K562 (cell line): ENCODE measurements at regions of chr1 and their contacts with region 1.

Region 1: GRCh38 chr1:47333922-47334764 is 553 bp downstream of the CMPK1 start:
- DNase-seq: peak; percentile 85 to 93 (median 90)
- ATAC-seq: peak; percentile 88
- H3K4me3 ChIP-seq: peak overlapping the region; percentile 93
- H3K27ac ChIP-seq: peak overlapping the region; percentile 85
- H3K4me1 ChIP-seq: peaks cover 23 to 28% of the 10 kb centered on the region in 2 experiments; a peak in 4 of 5 replicates
- H3K27me3 ChIP-seq: no peaks in the 10 kb centered on the region
- CTCF ChIP-seq: peak; percentile 41 to 53 (median 51)
- EP300 ChIP-seq: no peak; the same call in 1 of the 2 replicates
- POLR2A ChIP-seq: peak; percentile 81
- RAD21 ChIP-seq: no peak

Region 2: DNA sequence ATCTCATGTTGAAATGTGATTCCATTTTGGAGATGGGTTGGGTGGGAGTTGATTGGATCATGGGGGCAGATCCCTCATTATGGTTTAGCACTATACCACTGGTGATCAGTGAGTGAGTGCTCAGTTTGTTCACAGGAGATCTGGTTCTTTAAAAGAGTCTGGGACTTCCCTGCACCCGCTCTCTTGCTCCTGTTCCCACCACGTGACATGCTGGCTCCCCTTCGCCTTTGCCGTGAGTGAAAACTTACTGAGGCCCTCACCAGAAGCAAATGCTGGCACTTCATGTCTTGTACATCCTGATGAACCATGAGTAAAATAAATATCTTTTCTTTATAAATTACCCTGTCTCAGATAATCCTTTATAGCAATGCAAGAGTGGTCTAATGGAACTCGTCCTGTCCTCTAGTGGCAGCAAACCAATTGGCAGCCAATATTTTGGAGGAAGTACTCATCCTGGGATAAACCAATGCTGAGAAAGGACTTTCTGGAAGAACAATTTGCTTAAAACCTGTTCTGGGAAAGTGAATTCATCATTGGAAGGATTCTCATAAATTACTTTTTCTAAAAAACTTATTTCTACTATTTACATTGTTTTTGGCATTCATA is 365.0 kb before region 1 on chr1:
- CTCF ChIA-PET with region 1: no interaction called
- POLR2A ChIA-PET with region 1: no interaction called
- in situ Hi-C with region 1: no loop called
- intact Hi-C with region 1: no loop called
- DNase-seq: peak in 3 of 4 experiments; percentile 7 to 14 (median 11)
- ATAC-seq: peak; percentile 70
- H3K4me3 ChIP-seq: no peak overlapping the region
- H3K27ac ChIP-seq: no peak overlapping the region
- H3K4me1 ChIP-seq: no peaks in the 10 kb centered on the region
- H3K27me3 ChIP-seq: peaks cover 0 to 6% of the 10 kb centered on the region in 2 experiments; a peak in 1 of 5 replicates
- CTCF ChIP-seq: peak; percentile 26 to 52 (median 49); a peak in 5 of 6 replicates
- EP300 ChIP-seq: no peak
- POLR2A ChIP-seq: no peak
- RAD21 ChIP-seq: no peak

Region 3: DNA sequence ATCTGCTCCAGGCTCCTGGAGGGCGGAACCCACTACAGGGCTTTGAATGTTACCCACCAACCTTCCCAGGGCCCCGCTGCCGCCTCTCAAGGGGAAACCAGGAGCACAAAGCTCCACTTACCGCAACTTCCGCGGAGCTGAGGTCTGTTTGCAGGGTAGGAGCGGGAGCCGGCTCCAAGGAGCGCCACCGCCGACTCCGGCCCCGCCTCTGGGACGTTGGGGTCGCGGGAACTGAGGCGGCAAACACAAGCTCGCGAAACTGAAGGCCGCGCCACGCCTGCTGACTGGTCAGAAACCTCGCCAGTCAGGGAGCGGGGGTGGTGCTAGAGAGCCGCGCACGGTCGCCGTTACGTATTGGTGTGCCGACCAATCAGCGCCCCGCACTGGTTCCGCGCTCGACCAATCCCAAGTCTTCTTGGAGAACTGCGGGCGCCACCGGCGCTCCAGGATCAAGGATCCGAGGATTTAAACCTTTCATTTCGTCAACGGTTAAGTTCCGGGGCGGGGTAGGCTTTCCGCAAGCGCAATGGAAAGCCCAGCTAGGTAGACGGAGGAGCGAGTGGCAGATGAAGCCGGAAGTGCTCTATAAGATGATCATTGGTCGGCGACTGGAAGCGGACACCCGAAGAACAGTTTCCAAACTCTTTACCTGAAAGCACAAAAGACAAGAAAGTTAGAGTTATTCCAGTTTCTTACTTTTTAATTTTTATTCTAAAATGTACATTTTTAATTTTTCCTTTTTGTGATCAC is 20.1 kb before region 1 on chr1 and contains the start of gene STIL:
- CTCF ChIA-PET with region 1: no interaction called
- POLR2A ChIA-PET with region 1: interaction called, 318 read pairs
- in situ Hi-C with region 1: no loop called
- intact Hi-C with region 1: loop called (anchors 1 kb)
- DNase-seq: peak; percentile 100
- ATAC-seq: peak; percentile 96
- H3K4me3 ChIP-seq: peak within 1 kb of the TSS; percentile 71
- H3K27ac ChIP-seq: peak within 1 kb of the TSS; percentile 94
- H3K4me1 ChIP-seq: peaks cover 5 to 14% of the 10 kb centered on the region in 2 experiments; a peak in 4 of 5 replicates
- H3K27me3 ChIP-seq: no peaks in the 10 kb centered on the region
- CTCF ChIP-seq: peak in 1 of 3 experiments; percentile 15; a peak in 1 of 6 replicates
- EP300 ChIP-seq: peak; percentile 50; the same call in 1 of the 2 replicates
- POLR2A ChIP-seq: peak; percentile 97
- RAD21 ChIP-seq: no peak
- polyA plus RNA-seq, gene STIL: 10.5 to 17.5 TPM

Region 4: DNA sequence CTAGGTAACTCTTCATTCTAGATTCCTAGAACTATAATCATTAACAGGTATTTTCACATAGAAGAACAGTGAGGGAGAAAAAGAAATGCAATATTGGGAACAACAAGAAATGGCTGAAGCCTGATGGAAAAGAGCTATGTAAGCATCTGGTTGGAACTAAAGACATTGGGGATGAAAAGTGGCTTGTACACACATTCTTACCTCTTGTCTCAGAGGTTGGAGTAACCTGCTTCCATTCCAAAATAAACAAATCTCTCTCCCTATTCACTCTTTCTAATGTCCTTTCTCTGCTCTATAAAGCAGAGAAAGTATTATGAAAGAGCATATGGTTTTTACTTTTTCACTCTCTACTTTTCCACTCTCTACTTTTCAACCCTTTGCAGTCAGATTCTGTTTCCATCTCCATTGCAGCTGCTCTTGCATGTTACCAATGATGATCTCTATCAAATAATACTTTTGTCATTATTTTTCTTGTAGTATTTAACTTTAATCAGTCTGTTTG is 36.9 kb after region 1 on chr1:
- CTCF ChIA-PET with region 1: interaction called, 4 read pairs
- POLR2A ChIA-PET with region 1: interaction called, 3 read pairs
- in situ Hi-C with region 1: no loop called
- intact Hi-C with region 1: loop called (anchors 5 kb)
- DNase-seq: no peak
- ATAC-seq: no peak
- H3K4me3 ChIP-seq: no peak overlapping the region
- H3K27ac ChIP-seq: no peak overlapping the region
- H3K4me1 ChIP-seq: no peaks in the 10 kb centered on the region
- H3K27me3 ChIP-seq: no peaks in the 10 kb centered on the region
- CTCF ChIP-seq: no peak
- EP300 ChIP-seq: no peak
- POLR2A ChIP-seq: no peak
- RAD21 ChIP-seq: no peak